ENCODE measurements at regions of chr18 and their contacts with region 1.

Region 1: DNA sequence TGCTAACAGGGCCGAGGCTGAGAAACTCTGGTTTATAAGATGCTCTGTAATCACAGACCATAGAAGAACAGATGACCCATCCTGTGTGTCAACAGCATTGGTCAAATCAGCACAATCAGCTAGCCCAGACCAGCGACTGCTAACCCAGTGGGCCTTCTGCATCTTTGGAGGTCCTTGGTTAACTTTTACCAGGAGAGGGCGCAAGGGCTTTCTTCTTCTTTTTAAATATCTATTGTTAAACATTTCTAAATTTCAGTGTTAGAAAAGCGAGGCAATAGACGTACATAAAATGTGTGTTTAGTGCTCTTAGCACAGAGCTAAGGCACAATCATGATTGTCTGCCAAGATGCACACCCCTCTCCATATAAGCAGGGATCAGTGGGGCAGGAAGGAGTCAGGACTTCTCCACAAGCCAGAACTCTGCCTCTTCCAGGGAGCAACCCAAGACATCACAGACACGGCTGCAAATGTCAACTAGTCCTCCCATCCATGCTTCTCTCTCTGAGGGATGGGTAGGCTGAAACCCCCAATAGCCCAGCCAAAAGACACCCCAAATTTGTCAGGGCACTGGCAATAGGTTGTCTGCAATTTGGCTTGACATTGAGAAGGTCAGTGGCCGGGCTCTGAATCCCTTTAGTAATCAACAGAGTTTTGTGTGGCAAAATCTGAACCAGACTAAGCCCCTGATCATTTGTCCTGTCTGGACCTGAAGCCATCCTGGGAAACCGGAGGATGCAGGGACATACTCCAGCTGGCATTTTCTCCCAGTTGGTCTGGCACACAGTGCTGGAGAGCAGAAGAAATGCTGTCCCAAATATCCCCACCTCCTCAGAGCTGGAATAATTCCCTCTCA is 188.2 kb downstream of the BCL2 start:
- DNase-seq: peak; percentile 52
- H3K4me3 ChIP-seq: no peak overlapping the region
- H3K27ac ChIP-seq: no peak overlapping the region
- H3K4me1 ChIP-seq: no peaks in the 10 kb centered on the region
- H3K27me3 ChIP-seq: no peaks in the 10 kb centered on the region
- CTCF ChIP-seq: peak; percentile 57 to 61
- POLR2A ChIP-seq: no peak

Region 2: DNA sequence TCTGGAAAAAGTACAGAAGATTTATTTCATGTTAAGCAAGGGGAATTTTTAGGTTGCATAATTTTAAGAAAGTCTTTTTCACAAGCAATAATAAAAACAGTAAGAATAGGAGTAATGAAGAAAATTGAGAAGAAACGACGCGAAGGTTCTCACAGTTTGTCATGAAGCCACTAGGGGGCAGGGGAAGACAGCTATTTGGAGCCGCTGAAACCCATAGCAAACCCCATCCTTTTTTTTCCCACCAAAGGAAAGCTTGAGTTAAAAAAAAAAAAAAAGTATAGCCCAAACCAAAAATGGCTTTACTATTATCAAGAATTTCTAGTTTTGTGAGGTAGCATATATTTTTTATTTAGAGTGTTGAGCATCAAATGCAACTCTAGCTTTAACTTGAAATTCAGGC is 115.1 kb before region 1 on chr18:
- CTCF ChIA-PET with region 1: interaction called, 8 read pairs
- POLR2A ChIA-PET with region 1: no interaction called
- dilution Hi-C with region 1: no loop called
- intact Hi-C with region 1: loop called (anchors 1 kb)
- DNase-seq: peak; percentile 39
- H3K4me3 ChIP-seq: no peak overlapping the region
- H3K27ac ChIP-seq: no peak overlapping the region
- H3K4me1 ChIP-seq: no peaks in the 10 kb centered on the region
- H3K27me3 ChIP-seq: peaks cover 18 to 21% of the 10 kb centered on the region in 2 experiments
- CTCF ChIP-seq: peak; percentile 71 to 75
- POLR2A ChIP-seq: no peak

Region 3: GRCh38 chr18:63119647-63120046 is 11.7 kb before region 1 on chr18:
- CTCF ChIA-PET with region 1: interaction called, 15 read pairs
- POLR2A ChIA-PET with region 1: no interaction called
- dilution Hi-C with region 1: no loop called
- intact Hi-C with region 1: no loop called
- DNase-seq: peak; percentile 37
- H3K4me3 ChIP-seq: no peak overlapping the region
- H3K27ac ChIP-seq: no peak overlapping the region
- H3K4me1 ChIP-seq: no peaks in the 10 kb centered on the region
- H3K27me3 ChIP-seq: peaks cover 7 to 47% of the 10 kb centered on the region in 2 experiments
- CTCF ChIP-seq: peak in 1 of 2 donors; percentile 35
- POLR2A ChIP-seq: no peak

Region 4: DNA sequence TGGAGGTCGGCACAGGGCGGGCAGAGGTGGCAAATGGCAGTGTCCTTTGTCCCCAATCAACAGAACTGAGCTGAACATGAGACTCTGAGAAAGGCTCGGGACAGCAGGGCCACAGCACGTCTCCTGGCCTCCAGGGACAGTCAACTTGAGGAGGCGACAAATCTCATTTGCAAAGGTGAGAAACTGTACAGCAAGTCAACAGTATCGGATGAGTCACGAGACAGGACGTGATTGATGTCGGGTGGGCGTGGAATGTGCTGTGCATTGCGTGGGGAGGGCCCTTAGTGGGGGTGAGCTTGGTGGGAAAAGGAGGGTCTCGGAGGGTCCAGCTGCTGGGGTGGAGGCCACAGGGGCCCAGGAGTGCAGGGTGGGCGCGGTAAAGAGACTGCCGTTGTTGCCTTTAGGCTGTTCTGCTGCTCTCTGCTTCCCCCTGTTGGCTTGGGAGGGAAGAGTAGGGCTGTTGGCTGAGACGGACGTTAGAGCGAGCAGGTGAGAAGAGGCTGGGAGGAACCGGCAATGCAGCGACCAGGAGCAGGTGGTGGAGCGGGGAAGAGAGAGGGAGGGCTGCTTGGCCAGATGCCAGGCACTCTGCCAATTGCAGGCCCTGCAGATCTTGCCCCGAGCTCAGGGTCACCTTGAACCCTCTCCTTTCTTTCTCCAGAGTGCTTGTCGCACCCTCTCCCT is 24.0 kb after region 1 on chr18:
- CTCF ChIA-PET with region 1: interaction called, 63 read pairs
- POLR2A ChIA-PET with region 1: no interaction called
- dilution Hi-C with region 1: no loop called
- intact Hi-C with region 1: loop called (anchors 1 kb)
- DNase-seq: peak; percentile 57
- H3K4me3 ChIP-seq: no peak overlapping the region
- H3K27ac ChIP-seq: no peak overlapping the region
- H3K4me1 ChIP-seq: no peaks in the 10 kb centered on the region
- H3K27me3 ChIP-seq: peaks cover 14% of the 10 kb centered on the region in 2 experiments
- CTCF ChIP-seq: peak; percentile 77 to 94
- POLR2A ChIP-seq: no peak

Region 5: GRCh38 chr18:63192885-63193349 is 61.6 kb after region 1 on chr18:
- CTCF ChIA-PET with region 1: no interaction called
- POLR2A ChIA-PET with region 1: no interaction called
- dilution Hi-C with region 1: no loop called
- intact Hi-C with region 1: no loop called
- DNase-seq: no peak
- H3K4me3 ChIP-seq: no peak overlapping the region
- H3K27ac ChIP-seq: no peak overlapping the region
- H3K4me1 ChIP-seq: no peaks in the 10 kb centered on the region
- H3K27me3 ChIP-seq: no peaks in the 10 kb centered on the region
- CTCF ChIP-seq: no peak
- POLR2A ChIP-seq: no peak

Region 6: DNA sequence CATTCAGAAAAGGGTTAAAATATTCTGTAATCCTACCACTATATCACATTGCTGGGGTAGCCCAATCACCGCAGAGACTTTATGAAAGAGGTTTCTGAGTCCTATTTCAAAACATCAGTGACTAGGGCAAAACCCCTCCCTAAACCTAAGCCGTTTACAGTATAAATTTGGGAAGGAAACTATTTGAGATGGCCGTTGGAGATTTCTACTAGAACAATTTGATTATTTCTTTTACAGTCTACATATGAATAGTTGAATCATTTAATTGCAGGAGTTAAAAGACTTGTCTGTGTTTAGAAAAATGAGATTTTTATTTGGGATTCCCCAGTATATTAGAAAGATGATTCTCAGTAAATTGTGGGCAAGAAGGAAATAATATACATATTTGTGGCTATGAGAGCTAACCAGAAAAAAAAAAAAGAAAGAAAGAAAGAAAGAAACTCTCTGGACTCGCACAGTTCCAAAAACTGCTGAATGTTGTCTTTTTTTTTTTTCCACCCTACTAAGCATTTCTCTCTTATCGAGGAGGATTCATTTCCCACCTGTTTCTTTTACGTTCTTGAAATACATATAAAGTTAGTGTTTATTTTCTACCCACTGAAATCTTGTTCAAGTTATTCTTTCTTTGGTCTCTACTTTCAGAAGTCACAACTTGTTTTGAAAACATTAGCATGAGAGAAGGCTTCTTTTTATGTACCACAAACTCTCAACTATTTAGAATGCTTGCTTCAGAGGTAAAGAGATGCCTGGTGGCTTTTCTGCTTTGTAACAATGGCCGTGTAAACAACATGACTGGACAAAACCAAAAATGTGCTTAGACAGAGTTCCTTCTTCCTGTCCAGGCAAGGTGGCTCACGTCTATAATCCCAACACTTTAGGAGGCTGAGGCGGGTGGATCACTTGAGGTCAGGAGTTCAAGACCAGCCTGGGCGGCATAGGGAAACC is 122.4 kb after region 1 on chr18:
- CTCF ChIA-PET with region 1: no interaction called
- POLR2A ChIA-PET with region 1: no interaction called
- dilution Hi-C with region 1: no loop called
- intact Hi-C with region 1: no loop called
- DNase-seq: no peak
- H3K4me3 ChIP-seq: no peak overlapping the region
- H3K27ac ChIP-seq: no peak overlapping the region
- H3K4me1 ChIP-seq: no peaks in the 10 kb centered on the region
- H3K27me3 ChIP-seq: peaks cover 0 to 2% of the 10 kb centered on the region in 2 experiments
- CTCF ChIP-seq: no peak
- POLR2A ChIP-seq: no peak

Region 7: DNA sequence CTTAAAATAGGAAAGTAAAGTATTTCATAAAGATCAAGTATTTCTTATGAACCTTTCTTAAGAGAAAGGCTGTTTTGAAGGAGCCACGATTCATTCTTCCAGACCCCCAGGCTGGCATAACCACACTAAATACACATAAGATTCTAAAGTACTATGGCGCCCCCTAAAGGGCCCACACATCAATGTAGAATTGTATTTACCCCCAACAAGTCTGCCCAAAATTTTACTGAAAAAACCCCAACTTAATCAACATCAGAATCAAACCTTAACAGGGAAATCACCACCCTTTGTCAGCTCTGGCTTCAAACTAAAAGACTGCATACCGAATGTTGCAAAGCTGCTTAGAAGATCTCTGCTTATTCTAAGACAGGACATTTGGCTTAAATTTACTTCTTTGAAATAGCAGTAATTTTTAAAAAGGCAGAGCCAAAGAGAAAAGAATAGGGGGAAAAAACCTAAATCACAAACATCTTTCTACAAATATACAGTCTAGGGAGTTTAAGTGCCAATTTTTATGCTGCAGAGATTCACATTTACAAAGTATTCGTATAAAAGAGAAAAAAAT is 208.7 kb after region 1 on chr18:
- CTCF ChIA-PET with region 1: interaction called, 10 read pairs
- POLR2A ChIA-PET with region 1: no interaction called
- dilution Hi-C with region 1: no loop called
- intact Hi-C with region 1: no loop called
- DNase-seq: peak; percentile 40
- H3K4me3 ChIP-seq: no peak overlapping the region
- H3K27ac ChIP-seq: no peak overlapping the region
- H3K4me1 ChIP-seq: no peaks in the 10 kb centered on the region
- H3K27me3 ChIP-seq: no peaks in the 10 kb centered on the region
- CTCF ChIP-seq: peak; percentile 46 to 49
- POLR2A ChIP-seq: no peak

Region 8: DNA sequence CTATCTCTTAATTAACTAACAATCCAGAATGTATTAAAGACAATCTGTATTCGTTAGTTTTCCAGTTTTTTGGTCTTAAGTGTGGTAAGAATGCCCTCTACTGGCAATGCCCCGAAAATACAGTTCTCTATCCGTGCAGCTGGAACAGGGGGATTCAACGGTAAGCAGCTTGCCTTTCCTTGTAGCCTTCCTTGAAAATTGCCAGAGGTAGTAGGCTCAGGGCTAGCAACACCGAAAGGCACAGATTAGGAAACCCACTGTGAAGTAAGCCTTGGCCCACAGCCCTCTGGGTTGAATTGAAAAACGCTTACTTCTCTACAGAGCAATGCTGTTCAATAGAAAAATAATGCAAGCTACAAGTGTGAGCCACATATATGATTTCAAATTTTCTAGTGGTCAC is 308.0 kb after region 1 on chr18:
- CTCF ChIA-PET with region 1: interaction called, 39 read pairs
- POLR2A ChIA-PET with region 1: no interaction called
- dilution Hi-C with region 1: no loop called
- intact Hi-C with region 1: loop called (anchors 1 kb)
- DNase-seq: peak; percentile 78
- H3K4me3 ChIP-seq: no peak overlapping the region
- H3K27ac ChIP-seq: no peak overlapping the region
- H3K4me1 ChIP-seq: no peaks in the 10 kb centered on the region
- H3K27me3 ChIP-seq: peaks cover 4 to 12% of the 10 kb centered on the region in 2 experiments
- CTCF ChIP-seq: peak; percentile 63 to 71
- POLR2A ChIP-seq: no peak